ENCODE measurements at regions of chr12 and their contacts with region 1.

Region 1: GRCh38 chr12:127013197-127013596 is 1253.8 kb upstream of the TMEM132C start:
- DNase-seq: no peak
- H3K4me3 ChIP-seq: no peak overlapping the region
- H3K27ac ChIP-seq: no peak overlapping the region
- H3K4me1 ChIP-seq: no peaks in the 10 kb centered on the region
- CTCF ChIP-seq: no peak

Region 2: GRCh38 chr12:126708492-126708896 is 304.7 kb before region 1 on chr12:
- CTCF ChIA-PET with region 1: no interaction called
- POLR2A ChIA-PET with region 1: no interaction called
- intact Hi-C with region 1: no loop called
- DNase-seq: no peak
- H3K4me3 ChIP-seq: no peak overlapping the region
- H3K27ac ChIP-seq: no peak overlapping the region
- H3K4me1 ChIP-seq: no peaks in the 10 kb centered on the region
- CTCF ChIP-seq: no peak

Region 3: DNA sequence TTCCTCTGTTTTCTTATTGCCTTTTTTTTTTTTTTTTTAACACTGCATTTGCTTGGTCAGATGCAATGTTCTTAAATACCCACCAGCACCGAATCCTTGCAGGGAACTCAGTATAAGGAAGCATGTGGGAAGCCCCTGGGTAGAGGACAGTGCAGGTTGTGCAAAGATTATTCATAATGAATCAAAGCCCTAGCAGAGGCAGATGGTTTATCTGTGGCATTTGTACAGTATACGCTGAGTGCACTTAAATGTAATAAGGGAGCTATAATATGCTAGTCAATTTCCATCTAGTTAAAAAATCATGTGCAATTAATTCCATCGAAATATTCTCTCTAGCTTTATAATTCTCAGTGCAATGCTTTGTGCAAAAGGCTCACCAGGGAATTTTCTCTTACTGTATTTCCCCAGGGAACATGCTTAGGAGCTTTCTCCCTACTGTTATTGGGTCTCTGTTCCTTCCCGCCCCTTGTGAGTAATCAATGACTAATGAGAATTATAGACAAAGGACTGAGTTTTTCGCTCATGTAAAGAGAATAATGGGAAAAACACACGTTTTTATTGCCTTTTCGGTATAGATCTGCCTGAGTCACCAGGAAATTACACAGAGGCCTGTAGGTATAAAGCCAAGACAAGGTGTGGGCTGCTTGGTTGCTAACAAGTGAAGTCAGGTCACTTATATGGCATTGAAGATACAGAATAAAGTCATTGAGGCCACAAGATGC is 39.5 kb after region 1 on chr12:
- CTCF ChIA-PET with region 1: no interaction called
- POLR2A ChIA-PET with region 1: interaction called, 11 read pairs
- intact Hi-C with region 1: no loop called
- DNase-seq: no peak
- H3K4me3 ChIP-seq: no peak overlapping the region
- H3K27ac ChIP-seq: no peak overlapping the region
- H3K4me1 ChIP-seq: no peaks in the 10 kb centered on the region
- CTCF ChIP-seq: no peak

Measured in OCI-LY7 (cell line).